Esophagus muscularis mucosa (tissue), 4 donors: ENCODE measurements at regions of chr13 and their contacts with region 1.

Region 1: DNA sequence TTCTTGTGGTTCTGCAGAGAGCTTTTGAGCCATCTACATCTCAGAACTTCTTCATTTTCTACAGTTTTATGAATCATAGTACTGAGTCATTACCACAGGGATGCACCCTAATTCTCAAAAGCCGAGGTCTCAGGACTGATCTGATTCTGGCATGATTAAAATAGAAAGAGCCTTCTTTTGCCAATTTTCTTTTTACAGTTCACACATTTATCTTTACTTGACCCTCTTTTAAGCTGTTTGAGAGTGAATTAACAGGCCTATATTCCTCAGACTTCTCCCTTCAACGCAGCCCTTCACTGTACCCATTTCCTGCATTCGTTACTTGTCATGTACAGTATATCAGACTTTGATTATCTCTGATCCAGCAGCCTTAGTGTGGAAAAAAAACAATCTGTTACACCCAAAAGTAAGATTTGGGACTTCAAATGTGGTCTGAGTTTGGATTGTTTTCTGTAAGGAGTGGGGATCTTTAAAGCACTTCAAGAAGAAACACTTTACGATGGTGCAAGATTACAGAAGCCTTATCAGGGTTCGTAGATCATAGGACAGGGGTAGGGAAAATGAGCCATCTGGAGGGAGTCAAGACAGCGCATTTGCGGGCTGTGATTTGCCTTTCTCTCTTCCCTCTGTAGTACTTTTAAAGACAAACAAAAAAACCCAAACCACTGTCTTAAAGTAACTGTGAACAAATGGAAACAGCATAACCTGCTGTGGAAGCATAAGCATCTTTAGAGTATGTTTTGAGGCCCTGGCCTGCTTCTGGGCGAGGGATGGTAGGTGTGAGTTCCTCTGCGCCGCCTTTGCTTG is 15.3 kb upstream of the GPR183 start:
- DNase-seq: no peak
- H3K4me3 ChIP-seq: no peak overlapping the region
- H3K27ac ChIP-seq: peak overlapping the region in 2 of 4 donors; percentile 36 to 40
- H3K4me1 ChIP-seq: peaks cover 11 to 40% (median 35%) of the 10 kb centered on the region in 4 donors
- H3K27me3 ChIP-seq: no peaks in the 10 kb centered on the region
- CTCF ChIP-seq: no peak
- EP300 ChIP-seq: no peak
- POLR2A ChIP-seq: no peak

Region 2: DNA sequence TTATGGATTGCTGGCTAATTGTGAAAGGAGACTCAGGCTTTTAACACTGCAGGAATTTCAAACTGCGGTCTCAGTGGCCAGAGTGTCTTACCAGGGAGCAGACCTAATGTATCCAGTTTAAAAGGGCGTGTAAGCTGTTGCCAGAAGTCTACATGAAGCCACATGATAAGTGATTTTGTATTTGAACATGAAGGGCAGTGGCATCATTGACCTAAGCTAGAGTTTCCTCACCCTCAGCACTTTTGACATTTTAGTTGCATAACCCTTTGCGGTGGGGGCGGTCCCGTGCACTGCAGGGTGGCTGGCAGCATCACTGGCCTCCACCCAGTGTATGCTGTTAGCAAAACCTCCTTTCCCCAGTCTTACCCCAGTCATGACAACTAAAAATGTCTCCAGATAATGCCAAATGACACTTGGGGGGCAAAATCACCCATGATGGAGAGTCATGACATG is 40.7 kb before region 1 on chr13:
- intact Hi-C with region 1: loop called (anchors 5 kb)
- DNase-seq: no peak
- H3K4me3 ChIP-seq: no peak overlapping the region
- H3K27ac ChIP-seq: peak overlapping the region; percentile 44 to 66 (median 60)
- H3K4me1 ChIP-seq: peaks cover 23 to 47% (median 42%) of the 10 kb centered on the region in 4 donors
- H3K27me3 ChIP-seq: no peaks in the 10 kb centered on the region
- CTCF ChIP-seq: no peak
- EP300 ChIP-seq: no peak
- POLR2A ChIP-seq: no peak